Activated T-helper 1 cell treated with anti-CD3 and anti-CD28 coated beads, Interleukin-12 subunit alpha, Interleukin-12 subunit beta, Interleukin-2, Interleukin-4 antibody, amounts not matched to agents 30 ng/mL and 10 ng/mL and 1 ng/mL, durations not matched to agents 14 hours and 24 hours and 36 hours (primary cell): ENCODE measurements at regions of chr17 and their contacts with region 1.

Region 1: DNA sequence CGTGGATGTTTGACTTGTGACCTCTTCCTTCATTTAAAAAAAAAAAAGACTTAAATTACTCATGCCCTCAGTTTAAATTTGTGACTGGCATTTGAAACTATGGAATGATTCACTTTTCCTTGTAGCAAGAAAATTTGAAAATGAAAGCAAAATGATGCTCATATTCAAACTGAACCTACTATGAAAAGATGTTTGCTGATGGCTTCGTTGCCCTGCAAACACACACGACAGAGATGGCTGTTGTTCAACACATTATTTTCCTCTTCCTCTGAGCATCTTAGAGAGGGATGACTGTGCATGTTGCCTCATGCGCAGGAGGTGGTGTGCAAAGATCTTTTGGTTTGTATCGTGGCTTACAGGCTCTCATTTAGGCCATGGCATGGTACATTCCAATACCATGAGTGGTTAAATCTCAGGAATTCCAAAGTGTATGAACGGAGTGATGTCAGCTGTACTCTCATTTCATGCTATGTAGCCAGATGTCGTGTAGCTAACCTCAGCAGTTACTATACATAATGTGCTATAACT is 164.5 kb downstream of the PRKCA start:
- DNase-seq: peak; percentile 55
- H3K4me3 Mint-ChIP-seq: peak overlapping the region; percentile 63
- H3K27ac Mint-ChIP-seq: peak overlapping the region; percentile 95
- H3K4me1 Mint-ChIP-seq: peaks cover 79% of the 10 kb centered on the region
- H3K27me3 Mint-ChIP-seq: no peaks in the 10 kb centered on the region

Region 2: DNA sequence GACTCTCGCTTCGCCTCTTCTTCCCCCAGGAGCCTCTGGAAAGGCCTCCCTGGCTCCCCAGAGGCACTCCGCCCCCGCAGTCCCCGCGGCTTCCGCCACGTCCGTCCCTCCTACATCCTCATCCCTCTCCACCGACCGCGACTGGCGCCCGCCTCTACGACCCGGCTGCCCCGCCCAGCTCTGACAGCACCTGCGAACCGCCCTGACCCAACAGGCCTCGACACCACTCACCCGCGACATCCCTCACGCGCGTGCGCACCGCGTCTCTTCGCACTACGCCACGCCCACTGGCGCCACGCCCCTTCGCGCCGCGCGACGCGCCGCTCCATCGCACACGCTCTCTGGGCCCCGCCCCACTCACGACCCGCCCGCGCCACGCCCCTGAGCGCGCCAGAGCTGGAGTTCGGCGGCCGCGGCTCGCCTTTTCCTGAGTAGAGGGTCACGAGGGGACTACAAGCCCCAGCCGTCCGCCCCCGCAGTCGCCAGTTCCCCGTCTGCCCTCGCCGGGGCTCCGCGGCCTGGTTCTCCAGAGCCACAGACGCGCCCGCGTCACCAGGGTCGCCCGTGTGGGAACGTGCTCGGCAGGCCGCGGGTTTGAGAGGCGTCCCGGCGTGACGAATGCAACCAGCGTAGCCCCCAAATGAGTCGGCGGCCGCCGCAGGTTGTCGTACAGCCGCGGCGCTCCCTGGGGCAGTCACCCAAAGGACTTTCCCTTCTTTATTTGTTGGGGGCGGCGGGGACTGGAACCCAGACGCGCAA is 1491.4 kb before region 1 on chr17:
- intact Hi-C with region 1: loop called (anchors 2 kb)
- DNase-seq: peak; percentile 98
- H3K4me3 Mint-ChIP-seq: peak overlapping the region; percentile 74
- H3K27ac Mint-ChIP-seq: peak overlapping the region; percentile 99
- H3K4me1 Mint-ChIP-seq: peaks cover 60% of the 10 kb centered on the region
- H3K27me3 Mint-ChIP-seq: no peaks in the 10 kb centered on the region

Region 3: DNA sequence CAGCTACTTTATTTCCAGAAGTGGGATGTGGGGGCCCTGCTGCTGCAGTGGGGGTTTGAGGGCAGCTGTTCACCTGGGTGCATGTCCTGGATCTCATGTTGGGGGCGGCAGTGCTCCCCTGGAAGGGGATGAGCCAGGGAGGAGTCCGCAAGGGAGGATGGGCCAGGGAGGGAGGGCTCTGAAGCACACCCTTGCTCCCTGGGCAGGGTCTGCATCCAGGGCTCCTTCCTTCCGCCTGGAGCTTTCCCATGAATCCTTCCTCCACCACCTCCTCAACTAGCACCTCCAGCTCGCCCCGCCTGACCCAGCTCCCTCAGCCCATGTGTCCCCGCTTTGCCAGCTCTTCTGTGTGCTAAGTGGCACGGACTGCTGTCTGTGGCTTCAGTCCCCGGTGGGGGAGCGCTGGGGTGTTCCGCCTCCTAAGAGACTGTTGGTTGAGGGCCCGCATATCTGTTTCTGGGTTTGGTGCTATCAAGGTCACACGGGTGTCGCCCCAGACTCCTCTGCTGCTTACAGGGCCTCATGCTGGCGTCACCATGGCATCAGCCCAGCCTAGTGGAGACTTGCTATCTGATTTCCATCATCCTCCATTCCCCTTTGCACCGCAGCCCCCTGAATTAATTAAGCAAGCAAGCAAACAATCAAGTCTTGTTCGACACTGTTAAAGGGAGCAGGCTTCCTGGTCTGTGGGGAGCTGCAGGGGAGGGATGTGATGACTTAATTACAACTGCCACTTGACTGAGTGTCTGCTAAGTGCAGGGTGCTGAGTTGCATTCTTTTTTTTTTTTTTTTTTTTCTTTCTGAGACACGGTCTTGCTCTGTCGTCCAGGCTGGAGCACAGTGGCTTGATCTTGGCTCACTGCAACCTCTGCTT is 92.7 kb before region 1 on chr17:
- intact Hi-C with region 1: loop called (anchors 2 kb)
- DNase-seq: no peak
- H3K4me3 Mint-ChIP-seq: peak overlapping the region; percentile 30
- H3K27ac Mint-ChIP-seq: peak overlapping the region; percentile 61
- H3K4me1 Mint-ChIP-seq: peaks cover 64% of the 10 kb centered on the region
- H3K27me3 Mint-ChIP-seq: no peaks in the 10 kb centered on the region

Region 4: DNA sequence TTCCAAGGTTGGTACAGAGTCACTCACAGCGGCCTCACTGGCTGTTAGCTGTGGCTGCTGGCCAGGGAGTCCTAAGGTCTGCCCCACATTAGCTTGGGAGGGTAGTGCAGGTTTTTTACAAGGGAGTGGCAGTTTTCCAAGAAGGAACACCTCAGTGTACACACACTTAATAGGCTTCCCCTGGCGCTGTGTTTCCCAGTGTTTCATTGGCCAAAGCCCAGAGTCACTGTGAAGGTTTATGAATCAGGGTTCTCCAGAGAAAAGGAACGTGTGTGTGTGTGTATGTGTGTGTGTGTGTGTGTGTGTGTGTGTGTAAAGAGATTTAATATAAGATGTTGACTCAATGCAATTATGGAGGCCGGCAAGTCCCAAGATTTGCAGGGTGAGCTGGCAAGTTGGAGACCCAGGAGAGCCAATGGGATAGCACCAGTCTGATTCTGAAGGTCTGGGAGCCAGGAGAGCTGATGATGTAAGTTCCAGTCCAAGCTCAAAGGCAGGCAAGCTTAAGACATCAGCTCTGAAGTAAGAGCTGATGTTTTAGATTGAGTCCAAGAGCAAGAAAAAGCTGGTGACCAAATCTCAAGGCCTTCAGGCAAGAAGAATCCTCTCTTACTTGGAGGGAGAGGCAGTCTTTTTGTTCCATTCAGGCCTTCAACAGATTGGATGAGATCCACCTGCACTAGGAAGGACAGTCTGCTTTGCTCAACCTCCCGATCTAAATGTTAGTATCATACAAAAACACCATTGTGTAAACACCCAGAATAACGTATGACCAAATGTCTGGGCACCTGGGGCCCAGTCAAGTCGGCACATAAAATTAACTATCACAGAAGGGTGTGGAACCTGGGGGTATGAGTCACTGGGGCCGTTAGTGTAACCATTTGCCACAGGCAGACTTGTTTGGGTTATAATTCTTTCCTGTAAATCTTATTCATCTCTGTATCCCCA is 42.3 kb after region 1 on chr17:
- intact Hi-C with region 1: loop called (anchors 1 kb)
- DNase-seq: peak; percentile 29
- H3K4me3 Mint-ChIP-seq: peak overlapping the region; percentile 77
- H3K27ac Mint-ChIP-seq: peak overlapping the region; percentile 97
- H3K4me1 Mint-ChIP-seq: peaks cover 82% of the 10 kb centered on the region
- H3K27me3 Mint-ChIP-seq: no peaks in the 10 kb centered on the region

Region 5: GRCh38 chr17:66567234-66568170 is 100.6 kb after region 1 on chr17:
- intact Hi-C with region 1: loop called (anchors 5 kb)
- DNase-seq: peak; percentile 63
- H3K4me3 Mint-ChIP-seq: no peak overlapping the region
- H3K27ac Mint-ChIP-seq: peak overlapping the region; percentile 25
- H3K4me1 Mint-ChIP-seq: peaks cover 37% of the 10 kb centered on the region
- H3K27me3 Mint-ChIP-seq: no peaks in the 10 kb centered on the region

Region 6: GRCh38 chr17:66667491-66668030 is 200.7 kb after region 1 on chr17:
- intact Hi-C with region 1: loop called (anchors 1 kb)
- DNase-seq: peak; percentile 61
- H3K4me3 Mint-ChIP-seq: peak overlapping the region; percentile 67
- H3K27ac Mint-ChIP-seq: peak overlapping the region; percentile 88
- H3K4me1 Mint-ChIP-seq: peaks cover 76% of the 10 kb centered on the region
- H3K27me3 Mint-ChIP-seq: peaks cover 3% of the 10 kb centered on the region